Activated CD8-positive, alpha-beta T cell treated with anti-CD3 and anti-CD28 coated beads, Interleukin-2, amount 10 ng/mL, durations not matched to agents 7 days and 5 days (primary cell): ENCODE measurements at regions of chr4 and their contacts with region 1.

Region 1: GRCh38 chr4:154618708-154619315 is 6.4 kb upstream of the FGG start:
- DNase-seq: peak; percentile 77
- ATAC-seq: peak; percentile 78
- H3K4me3 Mint-ChIP-seq: no peak overlapping the region
- H3K27ac Mint-ChIP-seq: no peak overlapping the region
- H3K4me1 Mint-ChIP-seq: peaks cover 11% of the 10 kb centered on the region
- H3K27me3 Mint-ChIP-seq: peaks cover 8% of the 10 kb centered on the region

Region 2: DNA sequence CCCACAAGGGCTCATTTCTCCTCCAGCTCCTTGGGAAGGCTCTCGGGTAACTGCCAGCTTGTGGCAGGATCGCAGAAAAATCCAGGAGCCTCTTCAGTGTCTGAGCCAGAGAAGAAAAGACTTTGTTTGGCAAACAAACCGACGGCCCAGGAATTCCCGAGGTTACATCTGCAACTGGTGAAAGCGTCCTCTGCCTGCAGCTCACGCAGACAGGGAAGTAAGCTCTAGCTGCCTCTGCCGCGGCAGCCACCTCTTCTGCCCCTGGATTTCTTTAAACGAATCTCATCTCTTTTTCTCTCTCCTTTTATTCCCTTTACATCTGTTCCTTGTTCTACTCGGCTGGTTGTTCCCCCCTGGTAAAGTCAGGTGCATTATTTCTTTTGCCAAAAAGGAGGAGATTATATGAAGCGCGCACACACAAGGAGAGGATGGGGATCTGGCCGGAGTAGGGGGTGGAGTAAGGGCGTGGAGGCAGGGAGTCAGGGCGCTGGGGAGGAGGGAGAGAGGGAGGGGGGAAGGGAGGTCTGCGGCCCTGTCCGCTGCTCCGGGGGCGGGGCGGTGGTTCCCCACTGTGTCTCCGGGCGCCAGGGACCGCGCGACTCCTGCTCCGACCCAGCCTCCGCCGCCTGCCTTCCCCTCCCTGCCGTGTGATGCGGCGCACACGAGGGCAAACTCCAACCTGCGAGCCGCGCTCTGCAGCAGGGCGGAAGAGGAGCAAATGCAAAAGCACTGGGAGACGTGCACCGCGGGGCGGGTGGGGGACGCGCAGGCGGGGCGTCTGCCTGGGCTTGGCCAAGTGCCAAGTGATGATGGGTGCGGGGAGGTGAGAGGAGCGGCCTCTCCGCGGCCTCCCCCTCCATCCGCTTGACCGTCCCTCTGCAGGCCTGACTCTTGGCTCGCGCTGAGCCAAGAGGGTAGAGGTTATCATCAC is 127.2 kb before region 1 on chr4 and contains the start of gene DCHS2:
- CTCF ChIA-PET with region 1: no interaction called
- POLR2A ChIA-PET with region 1: no interaction called
- DNase-seq: peak; percentile 39
- ATAC-seq: peak; percentile 81
- H3K4me3 Mint-ChIP-seq: peak within 1 kb of the TSS; percentile 45
- H3K27ac Mint-ChIP-seq: peak within 1 kb of the TSS; percentile 34
- H3K4me1 Mint-ChIP-seq: peaks cover 22% of the 10 kb centered on the region
- H3K27me3 Mint-ChIP-seq: peaks cover 61% of the 10 kb centered on the region
- total RNA-seq, gene DCHS2: not detected

Region 3: GRCh38 chr4:154551872-154552686 is 66.7 kb before region 1 on chr4:
- CTCF ChIA-PET with region 1: interaction called, 206 read pairs
- POLR2A ChIA-PET with region 1: interaction called, 8 read pairs
- DNase-seq: peak; percentile 76
- ATAC-seq: peak; percentile 34
- H3K4me3 Mint-ChIP-seq: no peak overlapping the region
- H3K27ac Mint-ChIP-seq: no peak overlapping the region
- H3K4me1 Mint-ChIP-seq: peaks cover 23% of the 10 kb centered on the region
- H3K27me3 Mint-ChIP-seq: no peaks in the 10 kb centered on the region

Region 4: DNA sequence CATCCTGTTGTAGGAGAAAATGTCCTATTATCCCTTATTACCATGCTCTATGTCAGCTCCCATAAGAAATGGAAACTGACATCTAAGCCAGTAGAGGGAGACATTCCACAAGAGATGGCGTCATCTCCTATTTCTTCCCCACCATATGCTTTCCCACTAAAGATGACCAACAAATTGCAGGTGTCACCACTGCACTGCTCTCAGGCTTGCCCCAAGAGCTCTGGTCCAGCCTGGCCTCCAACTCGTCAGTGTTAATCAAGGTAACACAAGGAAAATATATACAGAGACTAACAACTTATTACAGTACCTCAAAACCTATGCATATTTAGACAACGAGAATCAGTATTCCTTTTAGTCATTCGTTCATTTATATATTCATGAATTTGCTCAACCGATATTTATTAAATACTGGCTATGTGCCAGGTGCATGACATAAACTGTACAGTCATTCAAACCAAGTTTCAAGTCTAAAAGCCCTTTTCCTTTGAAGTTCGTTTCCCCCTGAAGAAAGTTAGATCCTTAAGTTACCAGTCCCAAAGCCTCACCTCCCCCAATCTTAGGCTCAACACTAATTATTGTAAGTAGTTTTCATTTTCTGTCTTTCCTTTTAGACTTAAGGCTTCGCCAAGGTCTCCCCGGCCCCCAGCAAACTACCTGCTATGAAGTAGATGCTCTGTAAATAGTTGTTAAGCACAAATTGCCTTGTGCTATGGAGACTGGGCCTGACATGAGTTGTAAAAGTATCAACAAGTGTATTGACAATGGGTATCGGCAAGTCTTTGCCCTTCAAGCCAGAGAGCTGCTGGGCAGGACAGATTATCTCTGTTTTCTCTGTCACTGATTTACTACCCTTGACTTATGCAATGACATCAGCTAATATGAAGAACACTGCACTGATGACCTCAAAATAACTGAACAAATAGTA is 59.1 kb before region 1 on chr4:
- CTCF ChIA-PET with region 1: interaction called, 160 read pairs
- POLR2A ChIA-PET with region 1: interaction called, 3 read pairs
- DNase-seq: no peak
- ATAC-seq: no peak
- H3K4me3 Mint-ChIP-seq: no peak overlapping the region
- H3K27ac Mint-ChIP-seq: no peak overlapping the region
- H3K4me1 Mint-ChIP-seq: peaks cover 3% of the 10 kb centered on the region
- H3K27me3 Mint-ChIP-seq: peaks cover 7% of the 10 kb centered on the region